ENCODE measurements at regions of chr6 and their contacts with region 1.

Region 1: GRCh38 chr6:130020907-130021629 is 2.7 kb downstream of the L3MBTL3 start:
- DNase-seq: peak; percentile 90
- H3K4me3 Mint-ChIP-seq: peak overlapping the region; percentile 92
- H3K27ac Mint-ChIP-seq: peak overlapping the region; percentile 84
- H3K4me1 Mint-ChIP-seq: peaks cover 29% of the 10 kb centered on the region
- H3K27me3 Mint-ChIP-seq: no peaks in the 10 kb centered on the region

Region 2: GRCh38 chr6:129598244-129599187 is 422.6 kb before region 1 on chr6:
- CTCF ChIA-PET with region 1: interaction called, 14 read pairs
- intact Hi-C with region 1: loop called (anchors 1 kb)
- DNase-seq: no peak
- H3K4me3 Mint-ChIP-seq: no peak overlapping the region
- H3K27ac Mint-ChIP-seq: no peak overlapping the region
- H3K4me1 Mint-ChIP-seq: no peaks in the 10 kb centered on the region
- H3K27me3 Mint-ChIP-seq: no peaks in the 10 kb centered on the region

Region 3: DNA sequence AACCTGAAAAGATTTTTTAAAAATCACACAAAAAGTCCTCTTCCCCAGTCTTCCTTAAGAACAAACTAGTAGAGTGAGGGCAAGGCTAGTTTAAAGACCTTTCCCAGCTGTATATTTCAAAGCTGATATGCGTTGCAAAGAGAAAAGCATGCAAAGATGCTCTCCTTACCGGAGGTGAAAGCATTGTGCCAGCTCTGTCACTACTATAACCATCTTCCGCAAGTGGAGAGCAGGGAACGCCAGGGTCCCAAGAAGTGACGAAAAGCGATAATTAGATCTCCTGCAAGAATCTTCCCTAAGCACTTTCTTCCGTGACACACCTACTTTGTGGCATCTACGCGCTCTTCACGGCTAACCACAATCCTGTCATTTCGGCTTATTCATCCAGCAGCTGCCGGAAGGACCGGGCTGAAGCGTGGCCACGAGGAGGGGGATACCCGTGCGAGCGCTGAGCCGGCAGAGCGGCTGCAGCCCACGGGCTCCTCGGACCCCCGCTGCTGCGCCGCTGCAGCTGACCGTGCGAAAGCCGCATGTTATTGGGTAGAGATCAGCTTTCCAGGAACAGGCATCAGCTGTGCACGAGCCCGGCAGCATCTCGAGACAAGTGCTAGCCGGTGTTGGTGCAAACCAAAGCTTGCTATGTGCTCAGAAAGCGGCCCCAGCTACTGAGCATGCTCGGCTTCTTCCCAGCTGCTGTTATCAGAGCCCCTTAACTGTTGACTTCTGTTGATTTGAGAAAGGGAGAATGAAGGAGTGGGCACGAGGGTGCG is 253.9 kb before region 1 on chr6:
- CTCF ChIA-PET with region 1: interaction called, 4 read pairs
- intact Hi-C with region 1: loop called (anchors 2 kb)
- DNase-seq: peak; percentile 83
- H3K4me3 Mint-ChIP-seq: peak overlapping the region; percentile 74
- H3K27ac Mint-ChIP-seq: peak overlapping the region; percentile 19
- H3K4me1 Mint-ChIP-seq: peaks cover 15% of the 10 kb centered on the region
- H3K27me3 Mint-ChIP-seq: peaks cover 13% of the 10 kb centered on the region

Region 4: DNA sequence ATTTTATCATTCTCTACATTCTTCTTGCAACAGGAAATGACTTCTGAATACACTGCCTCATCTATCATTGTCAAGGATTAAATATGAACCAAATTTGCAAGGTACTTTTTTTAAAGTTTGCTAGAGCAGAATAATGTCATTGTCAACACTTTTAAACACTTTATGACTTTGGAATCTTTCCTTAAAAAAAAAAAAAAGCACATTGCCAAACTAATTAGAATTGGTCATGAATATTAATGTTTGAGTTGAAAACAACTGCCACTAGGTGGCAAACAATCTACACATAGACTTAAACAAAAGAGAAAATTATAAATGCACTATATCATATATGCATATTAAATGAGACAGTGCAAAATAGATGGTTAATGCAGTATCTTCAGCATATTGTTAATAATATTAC is 127.4 kb before region 1 on chr6:
- CTCF ChIA-PET with region 1: interaction called, 3 read pairs
- intact Hi-C with region 1: loop called (anchors 1 kb)
- DNase-seq: no peak
- H3K4me3 Mint-ChIP-seq: no peak overlapping the region
- H3K27ac Mint-ChIP-seq: no peak overlapping the region
- H3K4me1 Mint-ChIP-seq: peaks cover 12% of the 10 kb centered on the region
- H3K27me3 Mint-ChIP-seq: peaks cover 6% of the 10 kb centered on the region

Region 5: DNA sequence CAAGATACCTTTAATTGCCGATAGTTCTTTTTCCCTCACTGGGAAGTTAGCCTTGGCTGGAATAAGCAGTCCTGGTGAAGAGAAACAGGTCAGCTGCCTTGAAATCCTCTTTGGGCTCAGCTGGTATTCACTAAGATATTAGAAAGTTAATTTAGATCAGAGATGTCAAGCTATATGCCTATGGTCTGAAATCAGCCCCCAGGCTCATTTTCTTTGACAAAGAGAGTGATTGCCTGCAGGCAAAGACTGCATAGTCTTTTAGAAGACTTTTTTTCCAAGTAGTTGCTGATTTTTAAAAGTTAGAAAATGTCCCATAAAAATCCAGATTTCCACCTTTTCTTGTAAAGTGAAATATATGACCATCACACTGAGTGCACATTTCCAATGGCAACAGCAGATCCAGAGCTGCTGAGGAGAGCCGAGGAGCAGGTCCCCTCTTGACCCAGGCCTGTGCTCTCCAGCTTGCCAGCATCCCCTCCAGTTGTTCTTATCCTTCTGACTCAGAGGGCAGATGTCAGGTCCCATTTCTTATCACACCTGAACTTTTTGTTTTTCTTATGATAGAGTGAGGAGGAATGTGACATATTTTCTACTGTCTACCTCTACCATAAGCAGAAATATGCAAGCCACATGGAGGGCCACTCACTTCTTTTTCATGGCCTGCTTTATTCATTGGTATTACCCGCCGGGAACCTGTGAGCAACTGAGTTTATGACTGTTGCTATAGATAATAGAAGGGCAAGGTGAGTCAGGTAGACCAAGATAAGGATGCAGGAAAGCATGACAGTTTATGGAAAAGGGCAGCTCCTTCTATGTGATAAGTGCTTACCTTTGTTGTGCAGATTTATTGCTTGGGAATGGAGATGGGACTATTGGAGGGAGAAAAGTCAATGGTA is 20.3 kb before region 1 on chr6:
- CTCF ChIA-PET with region 1: no interaction called
- intact Hi-C with region 1: no loop called
- DNase-seq: no peak
- H3K4me3 Mint-ChIP-seq: no peak overlapping the region
- H3K27ac Mint-ChIP-seq: no peak overlapping the region
- H3K4me1 Mint-ChIP-seq: no peaks in the 10 kb centered on the region
- H3K27me3 Mint-ChIP-seq: no peaks in the 10 kb centered on the region

Region 6: GRCh38 chr6:130434174-130434873 is 413.3 kb after region 1 on chr6:
- CTCF ChIA-PET with region 1: no interaction called
- intact Hi-C with region 1: no loop called
- DNase-seq: no peak
- H3K4me3 Mint-ChIP-seq: no peak overlapping the region
- H3K27ac Mint-ChIP-seq: no peak overlapping the region
- H3K4me1 Mint-ChIP-seq: no peaks in the 10 kb centered on the region
- H3K27me3 Mint-ChIP-seq: no peaks in the 10 kb centered on the region

Region 7: GRCh38 chr6:131443514-131443913 is 1422.4 kb after region 1 on chr6:
- CTCF ChIA-PET with region 1: no interaction called
- intact Hi-C with region 1: loop called (anchors 10 kb)
- DNase-seq: peak; percentile 63
- H3K4me3 Mint-ChIP-seq: peak overlapping the region; percentile 83
- H3K27ac Mint-ChIP-seq: peak overlapping the region; percentile 90
- H3K4me1 Mint-ChIP-seq: peaks cover 58% of the 10 kb centered on the region
- H3K27me3 Mint-ChIP-seq: no peaks in the 10 kb centered on the region